Heart left ventricle (tissue), 16 donors: ENCODE measurements at regions of chr6 and their contacts with region 1.

Region 1: GRCh38 chr6:7414811-7415210 is 25.2 kb downstream of the RIOK1 start:
- DNase-seq: no peak
- ATAC-seq: no peak
- H3K4me3 ChIP-seq: no peak overlapping the region
- H3K27ac ChIP-seq: no peak overlapping the region
- H3K4me1 ChIP-seq: no peaks in the 10 kb centered on the region
- H3K27me3 ChIP-seq: no peaks in the 10 kb centered on the region
- CTCF ChIP-seq: no peak
- POLR2A ChIP-seq: no peak

Region 2: GRCh38 chr6:7389451-7390225 is 25.2 kb before region 1 on chr6 and contains the starts of genes CAGE1 and RIOK1:
- intact Hi-C with region 1: no loop called
- DNase-seq: peak; percentile 95 to 97 (median 97)
- ATAC-seq: peak; percentile 100
- H3K4me3 ChIP-seq: peak within 1 kb of the TSS; percentile 56 to 96 (median 84)
- H3K27ac ChIP-seq: peak within 1 kb of the TSS; percentile 22 to 97 (median 92)
- H3K4me1 ChIP-seq: peaks cover 0 to 31% (median 18%) of the 10 kb centered on the region in 12 donors
- H3K27me3 ChIP-seq: no peaks in the 10 kb centered on the region
- CTCF ChIP-seq: peak in 6 of 12 donors; percentile 13 to 32 (median 20)
- POLR2A ChIP-seq: peak in 1 of 2 donors; percentile 79
- total RNA-seq, gene CAGE1: 0.54 TPM in 1 of 9 donors, not detected in the others
- total RNA-seq, gene RIOK1: 8.8 to 14.4 (median 9.7) TPM

Region 3: GRCh38 chr6:7589949-7590917 is 175.4 kb after region 1 on chr6 and contains the start of gene SNRNP48:
- intact Hi-C with region 1: loop called in 1 of 10 experiments (anchors 10 kb)
- DNase-seq: peak; percentile 95 to 97 (median 96)
- ATAC-seq: peak; percentile 98 to 99 (median 98)
- H3K4me3 ChIP-seq: peak within 1 kb of the TSS; percentile 64 to 99 (median 88)
- H3K27ac ChIP-seq: peak within 1 kb of the TSS; percentile 66 to 89 (median 80)
- H3K4me1 ChIP-seq: peaks cover 3 to 52% (median 32%) of the 10 kb centered on the region in 12 donors
- H3K27me3 ChIP-seq: no peaks in the 10 kb centered on the region
- CTCF ChIP-seq: peak in 1 of 12 donors; percentile 7
- POLR2A ChIP-seq: peak; percentile 22 to 80
- total RNA-seq, gene SNRNP48: 8.2 to 25.8 (median 13.3) TPM